Endothelial cell of umbilical vein (primary cell): ENCODE measurements at regions of chr4 and their contacts with region 1.

Region 1: GRCh38 chr4:47914220-47914925 is at the start of gene NFXL1:
- DNase-seq: peak; percentile 97
- H3K4me3 ChIP-seq: peak within 1 kb of the TSS; percentile 73 to 93 (median 83)
- H3K27ac ChIP-seq: peak within 1 kb of the TSS; percentile 54
- H3K4me1 ChIP-seq: peaks cover 17% of the 10 kb centered on the region
- H3K27me3 ChIP-seq: no peaks in the 10 kb centered on the region
- CTCF ChIP-seq: no peak
- POLR2A ChIP-seq: peak; percentile 93
- total RNA-seq, gene NFXL1: 11.8 and 14.6 TPM in 2 replicates

Region 2: GRCh38 chr4:47926639-47927258 is 12.4 kb after region 1 on chr4:
- CTCF ChIA-PET with region 1: interaction called, 4 read pairs
- POLR2A ChIA-PET with region 1: no interaction called
- dilution Hi-C with region 1: no loop called
- intact Hi-C with region 1: loop called (anchors 2 kb)
- DNase-seq: peak; percentile 49
- H3K4me3 ChIP-seq: no peak overlapping the region
- H3K27ac ChIP-seq: no peak overlapping the region
- H3K4me1 ChIP-seq: peaks cover 3% of the 10 kb centered on the region
- H3K27me3 ChIP-seq: peaks cover 7 to 19% of the 10 kb centered on the region in 2 experiments
- CTCF ChIP-seq: peak; percentile 69
- POLR2A ChIP-seq: no peak

Region 3: GRCh38 chr4:47990145-47990544 is 75.8 kb after region 1 on chr4:
- CTCF ChIA-PET with region 1: no interaction called
- POLR2A ChIA-PET with region 1: no interaction called
- dilution Hi-C with region 1: no loop called
- intact Hi-C with region 1: no loop called
- DNase-seq: no peak
- H3K4me3 ChIP-seq: no peak overlapping the region
- H3K27ac ChIP-seq: no peak overlapping the region
- H3K4me1 ChIP-seq: no peaks in the 10 kb centered on the region
- H3K27me3 ChIP-seq: peaks cover 0 to 3% of the 10 kb centered on the region in 2 experiments
- CTCF ChIP-seq: no peak
- POLR2A ChIP-seq: no peak